Head of caudate nucleus (tissue), 42 donors: ENCODE measurements at regions of chr22 and their contacts with region 1.

Region 1: DNA sequence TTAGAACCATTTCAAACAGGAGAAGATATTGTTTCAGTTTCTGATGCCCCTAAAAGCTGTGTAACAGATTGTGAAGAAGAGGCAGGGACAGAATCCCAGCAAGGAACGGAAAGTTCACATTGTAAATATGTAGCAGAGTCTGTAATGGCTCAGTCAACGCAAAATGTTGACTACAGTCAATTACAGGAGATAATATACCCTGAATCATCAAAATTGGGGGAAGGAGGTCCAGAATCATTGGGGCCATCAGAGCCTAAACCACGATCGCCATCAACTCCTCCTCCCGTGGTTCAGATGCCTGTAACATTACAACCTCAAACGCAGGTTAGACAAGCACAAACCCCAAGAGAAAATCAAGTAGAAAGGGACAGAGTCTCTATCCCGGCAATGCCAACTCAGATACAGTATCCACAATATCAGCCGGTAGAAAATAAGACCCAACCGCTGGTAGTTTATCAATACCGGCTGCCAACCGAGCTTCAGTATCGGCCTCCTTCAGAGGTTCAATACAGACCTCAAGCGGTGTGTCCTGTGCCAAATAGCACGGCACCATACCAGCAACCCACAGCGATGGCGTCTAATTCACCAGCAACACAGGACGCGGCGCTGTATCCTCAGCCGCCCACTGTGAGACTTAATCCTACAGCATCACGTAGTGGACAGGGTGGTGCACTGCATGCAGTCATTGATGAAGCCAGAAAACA is 40.8 kb downstream of the IGLL1 start:
- DNase-seq: peak; percentile 70 to 93 (median 84)

Region 2: GRCh38 chr22:23219822-23220484 is 319.3 kb before region 1 on chr22:
- intact Hi-C with region 1: no loop called
- DNase-seq: peak in 24 of 42 donors; percentile 33 to 81 (median 55)

Region 3: DNA sequence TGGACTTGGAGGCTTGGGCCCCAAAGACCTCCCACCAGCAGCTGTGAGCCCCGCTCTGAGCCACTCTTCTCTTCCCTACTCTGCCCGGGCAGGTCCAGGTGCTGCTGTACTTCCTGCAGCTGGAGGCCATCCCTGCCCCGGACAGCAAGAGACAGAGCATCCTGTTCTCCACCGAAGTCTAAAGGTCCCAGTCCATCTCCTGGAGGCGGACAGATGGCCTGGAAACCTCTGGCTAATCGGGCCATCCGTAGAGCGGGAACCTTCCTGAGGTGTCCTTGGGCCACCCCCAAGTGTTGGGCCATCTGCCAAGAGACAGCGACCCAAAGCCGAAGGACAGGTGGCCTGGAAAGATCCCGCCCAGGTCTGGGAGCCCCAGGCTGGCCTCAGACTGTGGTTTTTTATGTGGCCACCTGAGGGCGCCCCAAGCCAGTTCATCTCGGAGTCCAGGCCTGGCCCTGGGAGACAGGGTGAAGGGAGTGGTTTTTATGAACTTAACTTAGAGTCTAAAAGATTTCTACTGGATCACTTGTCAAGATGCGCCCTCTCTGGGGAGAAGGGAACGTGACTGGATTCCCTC is 223.9 kb before region 1 on chr22:
- intact Hi-C with region 1: loop called (anchors 10 kb)
- DNase-seq: peak; percentile 34 to 86 (median 68)

Region 4: GRCh38 chr22:23385291-23386244 is 153.7 kb before region 1 on chr22:
- intact Hi-C with region 1: no loop called
- DNase-seq: peak; percentile 56 to 96 (median 89)

Region 5: DNA sequence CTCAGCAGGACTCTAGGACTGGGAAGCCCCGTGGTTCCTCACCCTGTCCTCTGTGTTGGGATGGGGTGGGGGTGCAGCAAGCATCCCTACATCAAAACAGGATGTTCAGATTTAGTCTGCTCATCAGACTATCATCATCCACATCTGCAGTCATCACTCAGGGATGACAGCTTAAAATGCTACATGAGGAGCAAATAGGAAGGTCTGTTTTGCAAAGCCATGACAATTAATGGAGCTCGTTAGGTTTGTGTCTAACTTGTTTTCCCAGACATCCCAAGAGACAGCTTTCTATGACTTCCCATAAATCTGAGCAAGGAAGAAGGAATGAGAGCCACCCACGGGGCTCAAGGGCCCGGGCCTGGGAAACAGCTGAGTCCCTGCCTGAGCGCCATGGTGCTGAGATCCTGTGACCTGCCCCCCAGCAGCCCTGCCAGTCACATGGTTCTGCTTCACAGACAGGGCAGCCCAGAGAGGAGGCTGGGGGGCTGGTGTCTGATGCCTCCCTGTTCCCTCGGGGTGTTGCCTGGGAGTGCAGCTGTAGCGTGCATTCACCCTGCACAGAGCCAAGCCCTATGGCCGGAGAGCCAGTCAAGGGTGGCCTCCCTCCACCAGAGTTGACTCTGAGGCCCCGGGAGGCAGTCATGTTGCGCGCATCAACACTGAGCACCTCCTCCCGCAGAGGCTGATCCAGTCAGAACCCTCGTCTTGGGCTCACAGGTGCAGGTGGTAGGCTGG is 287.3 kb after region 1 on chr22:
- intact Hi-C with region 1: no loop called
- DNase-seq: no peak

Region 6: GRCh38 chr22:23849009-23850006 is 310.0 kb after region 1 on chr22:
- intact Hi-C with region 1: loop called (anchors 5 kb)
- DNase-seq: peak; percentile 69 to 95 (median 89)